Gastrocnemius medialis (tissue), 4 donors: ENCODE measurements at regions of chr21 and their contacts with region 1.

Region 1: GRCh38 chr21:32143241-32143939 is 135.5 kb downstream of the MIS18A start:
- DNase-seq: peak in 1 of 2 donors; percentile 16
- ATAC-seq: no peak
- H3K4me3 ChIP-seq: no peak overlapping the region
- H3K27ac ChIP-seq: no peak overlapping the region
- H3K4me1 ChIP-seq: no peaks in the 10 kb centered on the region
- H3K27me3 ChIP-seq: no peaks in the 10 kb centered on the region
- CTCF ChIP-seq: no peak
- POLR2A ChIP-seq: no peak

Region 2: GRCh38 chr21:32099812-32100416 is 43.5 kb before region 1 on chr21:
- in situ Hi-C with region 1: no loop called
- intact Hi-C with region 1: loop called (anchors 5 kb)
- DNase-seq: no peak
- ATAC-seq: no peak
- H3K4me3 ChIP-seq: no peak overlapping the region
- H3K27ac ChIP-seq: no peak overlapping the region
- H3K4me1 ChIP-seq: peaks cover 0 to 3% of the 10 kb centered on the region in 2 donors
- H3K27me3 ChIP-seq: no peaks in the 10 kb centered on the region
- CTCF ChIP-seq: no peak
- POLR2A ChIP-seq: no peak